ENCODE measurements at regions of chr7 and their contacts with region 1.

Region 1: DNA sequence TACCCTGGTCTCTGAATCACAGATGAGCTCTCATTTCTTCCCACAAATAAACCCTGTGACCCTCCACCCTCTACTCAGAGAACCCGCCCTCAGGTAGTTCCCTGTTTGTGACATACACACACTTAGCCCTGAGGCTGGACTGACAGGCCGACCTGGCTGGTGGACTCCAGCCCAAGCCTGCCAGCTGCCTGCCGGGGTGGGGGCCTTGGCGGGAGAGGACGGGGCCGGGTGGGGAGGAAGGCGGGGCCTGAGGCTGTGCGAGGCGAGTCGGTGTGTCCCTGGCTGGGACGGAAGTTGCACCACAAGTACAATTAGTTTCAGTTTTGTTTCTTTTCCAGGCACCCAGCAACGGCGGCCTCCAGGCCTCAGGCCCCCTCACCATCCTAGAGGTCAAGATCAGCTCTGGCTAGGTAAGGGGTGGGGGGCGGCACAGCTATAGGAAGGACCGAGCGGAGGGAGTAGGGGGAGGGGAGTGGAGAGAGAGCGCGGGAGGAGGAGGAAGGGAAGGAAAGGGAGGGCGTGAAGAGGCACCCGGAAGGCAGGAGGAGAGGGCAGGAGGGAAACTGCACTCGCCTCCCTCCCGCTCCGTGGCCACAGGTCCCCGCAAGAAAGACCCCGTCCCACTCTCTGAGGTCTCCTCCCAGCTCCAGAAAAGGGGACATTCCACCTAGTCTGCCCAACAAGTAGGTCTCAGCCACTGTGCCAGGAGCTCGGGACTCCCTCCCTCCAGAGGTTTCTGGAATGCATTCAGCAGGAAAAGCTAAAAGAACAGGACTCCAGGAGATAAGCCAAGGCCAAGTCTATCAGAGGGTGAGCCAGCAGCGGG is at the start of gene TRIM56:
- DNase-seq: peak; percentile 86
- H3K4me3 ChIP-seq: peak within 1 kb of the TSS; percentile 77
- H3K27ac ChIP-seq: peak within 1 kb of the TSS; percentile 54
- H3K4me1 ChIP-seq: peaks cover 20% of the 10 kb centered on the region
- CTCF ChIP-seq: no peak
- total RNA-seq, gene TRIM56: 15.6 and 16.7 TPM in 2 replicates

Region 2: GRCh38 chr7:101138213-101138870 is 53.0 kb after region 1 on chr7:
- CTCF ChIA-PET with region 1: no interaction called
- POLR2A ChIA-PET with region 1: no interaction called
- intact Hi-C with region 1: loop called (anchors 5 kb)
- DNase-seq: peak; percentile 55
- H3K4me3 ChIP-seq: peak overlapping the region; percentile 22
- H3K27ac ChIP-seq: no peak overlapping the region
- H3K4me1 ChIP-seq: peaks cover 8% of the 10 kb centered on the region
- CTCF ChIP-seq: peak; percentile 94

Measured in OCI-LY7 (cell line).